ENCODE measurements at regions of chr9 and their contacts with region 1.

Region 1: DNA sequence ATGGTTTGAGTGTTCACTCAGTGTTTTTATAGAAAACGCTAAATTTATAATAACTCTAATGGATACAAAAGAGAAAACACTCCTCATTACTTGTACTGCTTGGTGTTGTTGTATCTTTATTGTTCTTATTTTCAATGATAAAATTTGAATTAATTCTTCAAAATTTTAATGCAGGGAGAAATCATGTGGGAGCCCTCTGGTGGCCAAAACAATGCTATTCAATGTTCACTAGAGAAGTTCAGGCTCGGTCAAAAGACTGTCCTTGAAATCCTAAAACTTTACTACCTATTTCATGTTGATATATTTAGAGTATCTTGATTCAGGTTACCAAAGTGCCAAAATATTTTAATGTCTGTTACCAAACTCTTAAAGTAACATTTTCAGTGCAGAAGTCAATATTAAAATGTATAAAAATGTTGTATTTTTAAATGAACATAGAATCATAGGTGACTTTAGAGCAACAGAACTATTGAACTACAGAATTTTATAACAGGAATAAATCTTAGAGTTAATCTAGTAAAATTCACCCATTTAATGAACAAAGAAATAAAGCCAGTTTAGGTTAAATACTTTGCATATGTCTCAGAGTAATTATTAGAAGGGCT is 1259.8 kb downstream of the PTPRD start:
- DNase-seq: no peak
- ATAC-seq: no peak
- H3K4me3 ChIP-seq: no peak overlapping the region
- H3K27ac ChIP-seq: no peak overlapping the region
- H3K4me1 ChIP-seq: no peaks in the 10 kb centered on the region
- H3K27me3 ChIP-seq: no peaks in the 10 kb centered on the region
- CTCF ChIP-seq: no peak
- POLR2A ChIP-seq: no peak

Region 2: DNA sequence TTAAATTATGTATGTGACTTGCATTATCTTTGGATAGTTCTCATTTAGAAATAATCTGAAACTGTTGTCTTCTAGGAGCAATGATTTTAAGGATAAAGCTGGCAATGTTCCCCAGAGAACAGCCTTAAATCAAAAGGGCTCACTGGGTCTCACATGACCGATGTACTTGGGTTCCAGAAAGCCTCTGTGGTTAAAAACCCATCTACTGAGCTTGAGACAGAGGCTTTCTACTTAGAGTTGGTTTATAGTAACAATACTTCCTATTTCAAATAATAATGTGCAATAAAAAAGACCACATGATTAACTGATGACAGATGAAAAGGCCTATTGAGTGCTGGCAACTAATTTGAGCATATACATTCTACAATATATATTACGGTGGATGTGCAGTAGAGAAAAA is 116.3 kb after region 1 on chr9:
- in situ Hi-C with region 1: loop called in 1 of 4 experiments (anchors 25 kb)
- intact Hi-C with region 1: no loop called
- DNase-seq: no peak
- ATAC-seq: no peak
- H3K4me3 ChIP-seq: no peak overlapping the region
- H3K27ac ChIP-seq: no peak overlapping the region
- H3K4me1 ChIP-seq: no peaks in the 10 kb centered on the region
- H3K27me3 ChIP-seq: no peaks in the 10 kb centered on the region
- CTCF ChIP-seq: no peak
- POLR2A ChIP-seq: no peak

Region 3: DNA sequence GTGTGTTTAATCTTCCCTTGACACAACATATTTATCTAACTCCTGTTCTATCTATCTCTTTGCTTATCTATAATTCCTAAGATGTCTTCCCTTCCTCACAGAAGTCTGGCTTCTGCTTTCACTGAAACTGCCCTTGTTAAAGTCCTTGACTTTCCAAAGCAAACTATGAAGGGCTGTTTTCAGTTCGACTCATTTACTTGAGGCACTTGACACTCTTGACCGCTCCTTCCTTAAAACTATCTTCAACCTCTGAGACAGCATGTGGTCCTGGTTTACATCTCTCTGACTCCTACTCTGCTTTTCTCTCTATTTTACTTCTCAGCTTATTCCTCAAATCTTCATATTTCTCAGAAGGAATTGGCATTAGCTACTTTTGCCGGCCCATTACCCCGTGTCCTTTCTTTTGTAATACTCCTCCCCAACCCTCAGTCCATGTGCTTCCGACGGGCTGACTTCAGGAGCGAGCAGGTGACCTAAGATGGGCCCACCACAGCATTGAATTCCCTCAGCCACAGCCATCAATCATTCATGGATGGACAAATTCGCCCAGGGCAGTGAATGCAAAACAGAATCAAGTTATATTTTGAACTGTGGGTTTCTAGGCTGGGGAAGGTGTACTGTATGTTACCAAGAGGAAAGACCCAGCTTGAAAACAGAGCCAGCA is 170.6 kb after region 1 on chr9:
- in situ Hi-C with region 1: no loop called
- intact Hi-C with region 1: no loop called
- DNase-seq: no peak
- ATAC-seq: no peak
- H3K4me3 ChIP-seq: no peak overlapping the region
- H3K27ac ChIP-seq: no peak overlapping the region
- H3K4me1 ChIP-seq: no peaks in the 10 kb centered on the region
- H3K27me3 ChIP-seq: no peaks in the 10 kb centered on the region
- CTCF ChIP-seq: no peak
- POLR2A ChIP-seq: no peak

Measured in gastrocnemius medialis (tissue), 4 donors.